Activated CD4-positive, alpha-beta T cell treated with anti-CD3 and anti-CD28 coated beads, Interleukin-2, amount 10 ng/mL, durations not matched to agents 24 days and 14 days (primary cell): ENCODE measurements at regions of chr2 and their contacts with region 1.

Region 1: DNA sequence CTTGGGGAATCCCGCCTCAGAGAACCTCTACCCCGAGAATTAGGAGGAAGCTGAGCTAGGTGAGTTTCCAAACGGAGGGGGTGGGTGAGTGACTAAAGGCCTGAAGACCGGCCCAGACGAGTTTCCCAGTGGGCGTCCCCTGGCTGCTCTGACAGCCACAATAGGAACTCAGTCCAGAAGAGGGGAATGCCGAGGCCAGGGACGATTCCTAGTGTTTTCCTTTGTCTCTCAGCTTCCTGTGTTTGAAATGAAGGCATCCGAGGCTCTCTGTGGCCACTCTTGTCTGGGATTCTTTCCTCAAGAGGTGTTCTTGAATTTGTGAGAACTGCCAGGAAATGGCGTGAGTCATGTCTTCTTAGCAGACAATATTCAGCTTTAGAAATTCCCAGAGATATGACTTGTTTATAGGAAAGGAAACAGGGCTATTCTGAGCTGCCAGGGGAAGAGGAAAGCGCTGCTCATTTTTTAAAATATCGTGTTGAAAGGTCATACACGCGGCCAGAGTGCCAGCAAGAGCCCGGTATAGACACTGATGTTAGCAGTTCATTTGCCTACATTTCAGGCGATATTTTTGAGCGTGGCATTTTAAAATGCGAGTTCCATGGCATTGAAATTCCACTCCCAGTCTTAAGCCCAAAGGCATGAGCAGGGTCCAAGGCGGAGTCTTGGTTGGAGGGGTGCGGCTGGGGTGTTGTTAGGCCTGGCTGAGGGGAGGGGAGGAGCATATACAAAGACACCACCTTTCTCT is 169.1 kb upstream of the KLF7 start:
- DNase-seq: peak; percentile 68
- H3K4me3 Mint-ChIP-seq: peak overlapping the region; percentile 52
- H3K27ac Mint-ChIP-seq: peak overlapping the region; percentile 86
- H3K4me1 Mint-ChIP-seq: peaks cover 68% of the 10 kb centered on the region
- H3K27me3 Mint-ChIP-seq: no peaks in the 10 kb centered on the region

Region 2: DNA sequence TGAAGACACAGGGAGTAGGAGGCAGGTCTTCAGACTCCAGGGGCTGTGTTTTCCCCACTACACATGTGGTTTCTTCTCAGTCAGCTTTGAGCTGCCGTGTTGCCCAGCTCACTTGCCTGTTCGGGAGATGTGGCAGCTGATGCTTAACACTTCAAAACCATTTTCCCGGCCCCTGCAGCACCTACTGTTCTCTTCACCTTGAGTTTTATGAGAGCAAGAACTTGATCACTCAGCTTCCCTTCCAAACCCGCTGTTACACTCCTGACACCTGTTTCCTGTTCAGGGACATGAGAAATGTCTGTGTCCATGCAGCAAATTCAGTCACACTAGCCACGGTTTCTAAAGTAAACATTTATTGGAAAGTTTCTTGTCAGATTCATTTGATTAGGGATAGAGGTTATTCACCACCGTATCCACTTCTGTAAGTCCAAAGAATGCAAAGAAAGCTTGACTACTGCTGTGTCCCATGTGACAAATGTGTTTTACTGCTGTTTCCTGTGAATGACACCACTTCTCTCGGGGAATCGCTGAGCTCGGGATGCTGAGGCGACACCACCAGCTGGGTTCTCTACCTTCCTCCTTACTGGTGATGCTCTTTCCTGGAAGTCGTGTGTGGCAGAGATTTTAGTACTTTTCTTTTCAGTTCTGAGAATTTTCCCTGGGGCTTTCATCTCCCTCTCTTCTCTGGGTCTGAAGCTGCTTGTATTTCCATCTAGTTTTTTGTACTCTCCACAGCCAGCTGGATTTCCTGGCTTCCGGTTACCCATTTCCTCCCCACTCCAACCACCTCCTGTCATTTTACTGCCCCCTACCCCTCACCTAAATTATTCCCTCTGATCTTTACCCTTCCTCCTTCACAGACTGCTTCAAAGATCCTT is 260.8 kb before region 1 on chr2:
- intact Hi-C with region 1: loop called (anchors 5 kb)
- DNase-seq: peak; percentile 84
- H3K4me3 Mint-ChIP-seq: peak overlapping the region; percentile 74
- H3K27ac Mint-ChIP-seq: peak overlapping the region; percentile 82
- H3K4me1 Mint-ChIP-seq: peaks cover 31% of the 10 kb centered on the region
- H3K27me3 Mint-ChIP-seq: no peaks in the 10 kb centered on the region

Region 3: GRCh38 chr2:207238831-207239701 is 95.7 kb before region 1 on chr2:
- intact Hi-C with region 1: loop called (anchors 2 kb)
- DNase-seq: peak; percentile 73
- H3K4me3 Mint-ChIP-seq: peak overlapping the region; percentile 49
- H3K27ac Mint-ChIP-seq: peak overlapping the region; percentile 76
- H3K4me1 Mint-ChIP-seq: peaks cover 42% of the 10 kb centered on the region
- H3K27me3 Mint-ChIP-seq: no peaks in the 10 kb centered on the region

Region 4: GRCh38 chr2:207288628-207289027 is 46.2 kb before region 1 on chr2:
- intact Hi-C with region 1: loop called (anchors 2 kb)
- DNase-seq: no peak
- H3K4me3 Mint-ChIP-seq: no peak overlapping the region
- H3K27ac Mint-ChIP-seq: peak overlapping the region; percentile 20
- H3K4me1 Mint-ChIP-seq: peaks cover 39% of the 10 kb centered on the region
- H3K27me3 Mint-ChIP-seq: no peaks in the 10 kb centered on the region